ENCODE measurements at regions of chr11 and their contacts with region 1.

Region 1: GRCh38 chr11:126194121-126194543 is 17.3 kb downstream of the RPUSD4 start:
- DNase-seq: peak; percentile 49
- H3K4me3 ChIP-seq: no peak overlapping the region
- H3K27ac ChIP-seq: no peak overlapping the region
- H3K4me1 ChIP-seq: peaks cover 14% of the 10 kb centered on the region
- CTCF ChIP-seq: peak; percentile 92

Region 2: GRCh38 chr11:125923012-125923579 is 271.0 kb before region 1 on chr11:
- CTCF ChIA-PET with region 1: interaction called, 3 read pairs
- POLR2A ChIA-PET with region 1: interaction called, 3 read pairs
- intact Hi-C with region 1: loop called (anchors 1 kb)
- DNase-seq: peak; percentile 78
- H3K4me3 ChIP-seq: no peak overlapping the region
- H3K27ac ChIP-seq: no peak overlapping the region
- H3K4me1 ChIP-seq: no peaks in the 10 kb centered on the region
- CTCF ChIP-seq: peak; percentile 92

Region 3: GRCh38 chr11:125941619-125942611 is 252.2 kb before region 1 on chr11:
- CTCF ChIA-PET with region 1: interaction called, 5 read pairs
- POLR2A ChIA-PET with region 1: interaction called, 8 read pairs
- intact Hi-C with region 1: loop called (anchors 1 kb)
- DNase-seq: peak; percentile 60
- H3K4me3 ChIP-seq: no peak overlapping the region
- H3K27ac ChIP-seq: no peak overlapping the region
- H3K4me1 ChIP-seq: no peaks in the 10 kb centered on the region
- CTCF ChIP-seq: peak; percentile 88

Region 4: DNA sequence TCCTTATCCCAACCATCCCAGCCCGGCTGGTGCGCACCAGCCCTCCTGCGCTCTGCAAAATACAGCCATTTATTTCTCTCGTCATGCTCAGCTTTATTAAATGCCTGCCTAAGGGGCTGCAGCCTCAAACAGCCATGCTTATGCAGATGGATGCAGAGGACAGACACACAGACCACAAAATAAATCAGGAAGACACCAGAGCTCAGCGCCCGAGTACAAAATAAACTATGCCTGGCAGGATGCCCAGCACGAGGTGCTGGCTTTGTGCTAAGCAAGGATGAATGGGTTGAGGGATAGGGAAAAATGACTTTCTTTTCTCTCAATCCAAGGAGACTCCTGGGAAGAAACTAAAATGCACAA is 53.2 kb before region 1 on chr11:
- CTCF ChIA-PET with region 1: no interaction called
- POLR2A ChIA-PET with region 1: no interaction called
- intact Hi-C with region 1: no loop called
- DNase-seq: no peak
- H3K4me3 ChIP-seq: no peak overlapping the region
- H3K27ac ChIP-seq: no peak overlapping the region
- H3K4me1 ChIP-seq: no peaks in the 10 kb centered on the region
- CTCF ChIP-seq: no peak

Region 5: DNA sequence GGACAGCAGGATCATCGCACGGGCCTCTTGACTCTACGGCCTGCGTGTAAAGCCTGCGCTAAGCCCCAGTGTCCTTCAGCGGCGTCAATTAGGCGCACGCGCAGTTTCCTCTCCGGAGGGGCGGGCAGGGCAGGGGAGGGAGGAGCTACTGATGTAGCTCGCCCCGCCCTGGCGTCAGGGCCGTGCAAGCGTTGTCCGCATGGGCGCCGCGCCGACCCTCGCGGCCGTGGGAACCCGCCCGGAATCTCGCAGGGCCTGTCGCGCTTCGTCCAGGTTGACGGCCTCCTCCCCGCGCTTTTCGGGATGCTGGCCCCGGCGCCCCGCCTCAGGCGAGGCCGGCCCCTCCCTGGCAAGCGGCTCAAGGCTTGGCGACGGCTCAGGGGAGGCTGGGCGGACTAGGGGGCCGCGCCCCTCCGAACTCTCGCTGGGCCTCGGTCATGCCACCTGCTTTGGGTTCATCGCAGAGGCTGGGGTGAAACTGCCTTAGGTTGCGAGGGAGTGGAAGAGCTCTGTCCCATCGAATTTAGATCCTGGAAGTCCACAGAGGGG is 222.5 kb after region 1 on chr11:
- CTCF ChIA-PET with region 1: no interaction called
- POLR2A ChIA-PET with region 1: no interaction called
- intact Hi-C with region 1: no loop called
- DNase-seq: peak; percentile 62
- H3K4me3 ChIP-seq: peak overlapping the region; percentile 54
- H3K27ac ChIP-seq: no peak overlapping the region
- H3K4me1 ChIP-seq: peaks cover 36% of the 10 kb centered on the region
- CTCF ChIP-seq: no peak